Calu3 (cell line): ENCODE measurements at regions of chr10 and their contacts with region 1.

Region 1: GRCh38 chr10:114245121-114245791 is 6.2 kb downstream of the VWA2 start:
- DNase-seq: peak; percentile 18
- H3K4me3 Mint-ChIP-seq: peak overlapping the region; percentile 39
- H3K27ac Mint-ChIP-seq: peak overlapping the region; percentile 40
- H3K4me1 Mint-ChIP-seq: peaks cover 31% of the 10 kb centered on the region
- H3K27me3 Mint-ChIP-seq: peaks cover 18% of the 10 kb centered on the region
- CTCF ChIP-seq: no peak

Region 2: DNA sequence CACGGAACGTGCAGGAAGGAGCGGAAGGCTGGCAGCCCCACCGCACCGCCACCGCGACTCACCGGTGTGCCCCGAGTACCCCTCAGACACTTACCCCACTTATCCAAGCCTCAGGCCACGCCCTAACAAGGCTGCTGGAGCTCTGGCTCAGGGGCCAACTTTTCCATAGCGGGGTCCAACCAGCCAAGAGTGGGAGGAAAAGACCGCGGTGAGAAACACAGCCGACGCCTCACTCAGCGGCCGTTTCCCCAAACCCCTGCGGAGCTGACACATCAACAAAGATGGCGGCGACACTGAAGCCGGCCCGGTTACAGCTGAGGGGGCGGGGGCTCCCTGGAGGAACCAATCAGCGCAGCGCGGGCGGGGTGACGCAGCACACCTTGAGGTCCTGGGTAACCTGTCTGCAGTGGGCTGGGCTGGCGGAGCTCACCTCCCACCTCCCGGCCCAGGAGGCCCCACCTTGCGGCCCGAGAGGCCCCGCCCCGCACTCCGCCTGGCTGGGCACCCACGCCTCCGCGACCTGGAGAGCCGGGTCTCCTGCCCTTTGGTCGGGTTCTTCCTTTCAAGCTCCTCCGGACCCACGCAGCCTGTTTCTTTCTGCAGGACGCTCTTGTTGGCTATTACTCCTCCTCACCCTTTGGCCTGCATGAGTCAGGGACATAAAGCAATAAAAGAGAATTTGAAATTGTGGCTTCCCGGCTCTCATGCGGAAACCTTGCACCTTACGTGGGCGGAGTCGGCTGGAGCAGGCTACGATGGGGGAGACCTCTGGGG is 71.1 kb before region 1 on chr10 and contains the start of gene CCDC186:
- CTCF ChIA-PET with region 1: no interaction called
- intact Hi-C with region 1: loop called (anchors 5 kb)
- DNase-seq: peak; percentile 96
- H3K4me3 Mint-ChIP-seq: peak within 1 kb of the TSS; percentile 99
- H3K27ac Mint-ChIP-seq: peak within 1 kb of the TSS; percentile 99
- H3K4me1 Mint-ChIP-seq: peaks cover 13% of the 10 kb centered on the region
- H3K27me3 Mint-ChIP-seq: no peaks in the 10 kb centered on the region
- CTCF ChIP-seq: no peak
- total RNA-seq, gene CCDC186: 12.8 and 14.9 TPM in 2 replicates